Mammary epithelial cell (primary cell): ENCODE measurements at regions of chr9 and their contacts with region 1.

Region 1: DNA sequence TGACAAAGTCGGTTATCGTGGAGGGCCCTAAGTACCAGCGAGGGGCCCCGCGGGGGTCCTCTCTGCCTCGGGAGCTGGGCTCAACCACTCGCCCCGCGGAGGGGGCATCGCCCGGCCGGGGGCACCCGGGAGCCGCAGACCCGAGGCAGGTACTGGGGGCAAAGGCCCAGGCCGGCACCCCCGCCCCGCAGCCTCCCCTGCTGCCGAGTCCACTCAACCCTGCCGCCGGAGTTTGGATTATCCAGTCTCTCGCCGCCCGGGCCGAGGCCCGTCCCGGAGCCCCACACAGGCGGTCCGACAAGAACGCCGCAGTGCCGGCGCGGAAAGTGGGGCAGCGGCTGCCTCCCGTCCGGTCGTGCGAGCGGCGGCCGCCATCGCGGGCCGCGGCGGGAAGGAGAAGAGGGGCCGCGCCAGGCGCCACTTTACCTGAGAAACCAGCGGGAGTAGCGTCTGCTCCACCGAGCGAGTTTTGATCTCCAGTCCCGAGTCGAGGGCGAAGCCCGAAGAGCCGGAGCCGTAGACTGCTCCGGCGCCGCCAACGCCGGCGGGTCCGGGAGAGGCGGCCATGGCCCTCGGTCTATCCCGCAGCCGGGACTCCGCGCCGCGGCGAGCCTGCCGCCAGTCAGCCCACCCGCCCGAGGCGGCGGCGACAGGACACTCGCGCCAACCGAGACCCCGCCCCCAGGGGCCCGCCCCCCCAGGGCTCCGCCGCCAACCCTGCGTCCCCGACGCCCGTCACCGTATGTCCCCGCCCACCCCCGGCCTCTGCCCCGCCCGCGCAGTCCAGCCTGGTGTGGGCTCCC is at the start of gene CTNNAL1:
- DNase-seq: peak; percentile 71
- H3K4me3 ChIP-seq: peak within 1 kb of the TSS; percentile 55 to 73 (median 69)
- H3K27ac ChIP-seq: peak within 1 kb of the TSS; percentile 91
- H3K4me1 ChIP-seq: peaks cover 27% of the 10 kb centered on the region
- H3K27me3 ChIP-seq: no peaks in the 10 kb centered on the region
- CTCF ChIP-seq: no peak
- total RNA-seq, gene CTNNAL1: 43.7 to 82.2 TPM

Region 2: GRCh38 chr9:109035684-109036423 is 22.8 kb after region 1 on chr9:
- CTCF ChIA-PET with region 1: no interaction called
- dilution Hi-C with region 1: no loop called
- in situ Hi-C with region 1: no loop called
- intact Hi-C with region 1: loop called (anchors 2 kb)
- DNase-seq: peak; percentile 63
- H3K4me3 ChIP-seq: no peak overlapping the region
- H3K27ac ChIP-seq: peak overlapping the region; percentile 40
- H3K4me1 ChIP-seq: peaks cover 32% of the 10 kb centered on the region
- H3K27me3 ChIP-seq: no peaks in the 10 kb centered on the region
- CTCF ChIP-seq: no peak

Region 3: DNA sequence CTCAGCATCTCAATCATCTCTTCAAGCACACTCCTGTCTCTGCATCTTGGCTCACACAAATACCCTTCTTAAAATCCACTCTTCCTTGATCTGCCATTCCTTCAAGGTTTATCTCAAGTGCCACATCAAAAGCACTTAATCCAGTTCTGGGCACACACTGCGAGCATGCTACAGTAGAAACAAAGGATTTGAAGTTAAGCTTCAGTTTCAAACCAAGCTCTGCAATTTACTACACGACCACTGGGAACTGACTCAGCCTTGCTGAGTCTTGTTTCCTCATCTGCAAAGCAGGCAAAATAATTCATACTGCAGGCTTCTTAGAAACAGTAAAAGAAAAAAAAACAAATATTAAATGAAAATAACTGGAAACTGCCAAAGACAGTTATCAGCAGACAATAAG is 50.7 kb after region 1 on chr9:
- CTCF ChIA-PET with region 1: no interaction called
- dilution Hi-C with region 1: no loop called
- in situ Hi-C with region 1: no loop called
- intact Hi-C with region 1: loop called (anchors 2 kb)
- DNase-seq: peak; percentile 14
- H3K4me3 ChIP-seq: no peak overlapping the region
- H3K27ac ChIP-seq: no peak overlapping the region
- H3K4me1 ChIP-seq: peaks cover 44% of the 10 kb centered on the region
- H3K27me3 ChIP-seq: no peaks in the 10 kb centered on the region
- CTCF ChIP-seq: peak; percentile 8 to 19

Region 4: GRCh38 chr9:109110326-109111021 is 97.4 kb after region 1 on chr9:
- CTCF ChIA-PET with region 1: no interaction called
- dilution Hi-C with region 1: no loop called
- in situ Hi-C with region 1: no loop called
- intact Hi-C with region 1: loop called (anchors 2 kb)
- DNase-seq: peak; percentile 77
- H3K4me3 ChIP-seq: peak overlapping the region in 2 of 3 experiments; percentile 17 to 28
- H3K27ac ChIP-seq: peak overlapping the region; percentile 93
- H3K4me1 ChIP-seq: peaks cover 43% of the 10 kb centered on the region
- H3K27me3 ChIP-seq: no peaks in the 10 kb centered on the region
- CTCF ChIP-seq: no peak

Region 5: DNA sequence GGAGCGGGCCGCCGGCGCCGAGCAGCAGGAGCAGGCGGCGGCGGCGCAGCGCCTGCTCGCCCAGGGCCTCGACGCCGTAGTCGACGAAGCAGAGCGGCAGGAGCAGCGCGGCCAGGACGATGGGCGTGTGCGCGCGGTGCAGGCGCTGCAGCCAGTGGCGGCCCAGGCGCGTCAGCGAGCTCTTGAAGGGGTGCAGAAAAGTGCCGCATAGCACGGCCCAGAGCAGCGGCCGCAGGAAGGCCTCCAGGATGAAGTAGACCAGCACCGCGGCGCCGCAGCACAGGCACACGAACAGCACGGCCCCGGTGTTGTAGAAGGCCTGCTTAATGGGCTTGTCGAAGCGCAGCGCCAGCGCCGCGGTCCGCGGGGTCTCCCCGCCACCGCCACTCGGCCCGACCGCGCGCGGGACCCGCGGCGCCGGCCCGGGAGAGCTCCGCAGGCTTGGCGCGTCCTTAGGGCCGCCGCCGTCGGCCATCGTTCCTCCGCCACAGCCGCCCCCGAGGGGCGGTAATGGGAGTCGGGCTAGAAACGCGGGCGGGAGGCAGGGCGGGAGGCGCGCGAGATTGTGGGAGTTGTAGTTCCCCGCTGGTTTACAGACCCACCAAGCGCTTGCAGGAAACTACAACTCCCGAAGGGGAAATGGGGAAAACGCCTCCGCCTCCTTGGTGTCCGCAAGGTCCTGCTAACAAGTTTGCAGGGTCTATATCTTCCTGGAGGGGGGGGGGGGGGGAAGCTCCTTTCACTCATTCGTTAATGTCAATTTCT is 106.5 kb after region 1 on chr9 and contains the start of gene TMEM245:
- CTCF ChIA-PET with region 1: no interaction called
- dilution Hi-C with region 1: no loop called
- in situ Hi-C with region 1: no loop called
- intact Hi-C with region 1: loop called (anchors 1 kb)
- DNase-seq: peak; percentile 99
- H3K4me3 ChIP-seq: peak within 1 kb of the TSS; percentile 70 to 91 (median 89)
- H3K27ac ChIP-seq: peak within 1 kb of the TSS; percentile 46
- H3K4me1 ChIP-seq: peaks cover 15% of the 10 kb centered on the region
- H3K27me3 ChIP-seq: no peaks in the 10 kb centered on the region
- CTCF ChIP-seq: no peak
- total RNA-seq, gene TMEM245: 33.1 to 70.3 TPM